HEK293T (cell line): ENCODE measurements at regions of chr5 and their contacts with region 1.

Region 1: GRCh38 chr5:31516802-31517201 is 15.1 kb downstream of the DROSHA start:
- DNase-seq: no peak

Region 2: DNA sequence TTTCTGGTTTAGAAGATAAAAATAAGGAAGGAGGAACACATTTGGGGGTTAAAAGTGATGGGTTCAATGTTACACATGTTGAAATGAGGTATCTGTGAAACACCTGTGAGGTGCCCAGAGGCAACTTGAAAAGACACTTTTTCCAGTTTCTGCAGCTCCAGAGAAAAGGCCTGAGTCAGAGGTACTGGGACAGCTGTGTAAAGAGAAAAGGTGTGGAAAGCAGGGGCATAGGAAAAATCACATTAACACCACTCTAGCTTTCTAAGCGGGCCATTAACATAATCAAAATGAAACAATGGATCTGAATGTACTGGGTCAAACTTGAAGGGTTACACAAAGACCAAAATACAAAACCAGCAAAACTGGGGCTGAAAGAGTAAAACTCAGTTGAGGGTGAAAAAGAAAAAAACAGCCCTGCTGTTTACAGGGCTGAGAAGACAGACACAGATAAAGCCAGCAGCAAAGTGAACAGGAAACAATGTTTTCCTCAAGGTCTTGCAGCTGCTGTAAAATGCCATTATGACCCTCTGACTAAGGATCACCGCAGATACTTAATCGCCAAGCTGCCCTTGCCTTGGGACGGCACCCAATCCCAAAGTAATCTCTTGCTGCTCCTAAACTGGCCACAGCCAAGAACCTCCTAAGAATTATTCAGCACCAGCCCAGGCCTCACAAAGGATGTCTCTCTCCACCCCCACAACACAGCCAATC is 89.6 kb before region 1 on chr5:
- CTCF ChIA-PET with region 1: no interaction called
- POLR2A ChIA-PET with region 1: no interaction called
- DNase-seq: no peak

Region 3: DNA sequence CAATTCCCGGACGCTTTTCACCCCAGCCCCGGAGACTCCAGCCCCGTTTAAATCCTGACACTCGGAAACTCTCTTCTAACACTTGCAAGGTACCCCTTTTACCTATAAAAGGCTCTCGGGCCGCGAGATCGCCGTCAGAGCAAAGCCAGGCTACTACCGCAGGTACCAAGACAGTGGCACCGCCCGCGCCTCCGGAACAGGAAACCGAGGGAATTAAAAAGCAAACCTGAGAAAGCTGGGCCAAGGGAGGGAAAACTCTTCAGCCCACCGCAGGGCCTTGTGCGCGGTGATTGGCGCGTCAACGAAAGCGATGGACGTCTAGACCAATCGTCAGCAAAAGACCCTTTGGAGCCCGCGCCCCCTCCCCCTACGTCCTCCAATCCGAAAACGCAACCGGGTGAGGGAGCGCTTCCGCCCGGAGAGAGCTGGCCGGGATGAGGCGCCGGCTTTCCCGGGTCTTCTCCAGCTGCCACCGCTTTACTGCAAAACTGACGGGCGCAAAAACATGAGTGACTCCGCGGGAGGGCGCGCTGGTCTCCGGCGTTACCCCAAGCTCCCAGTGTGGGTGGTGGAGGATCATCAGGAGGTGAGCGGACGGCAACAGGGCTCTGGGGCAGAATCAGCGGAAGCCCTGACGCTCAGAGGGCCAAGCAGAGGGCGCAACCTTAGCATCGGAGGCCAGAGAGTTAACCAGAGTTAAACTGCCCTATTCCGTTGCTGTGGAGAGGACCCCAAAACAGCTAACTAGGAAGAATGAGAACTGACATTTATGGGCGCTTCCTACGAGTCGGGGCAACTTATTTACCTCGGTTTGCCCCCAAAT is 15.3 kb after region 1 on chr5 and contains the starts of genes C5orf22 and DROSHA:
- CTCF ChIA-PET with region 1: interaction called, 3 read pairs
- POLR2A ChIA-PET with region 1: interaction called, 15 read pairs
- DNase-seq: peak; percentile 90

Region 4: DNA sequence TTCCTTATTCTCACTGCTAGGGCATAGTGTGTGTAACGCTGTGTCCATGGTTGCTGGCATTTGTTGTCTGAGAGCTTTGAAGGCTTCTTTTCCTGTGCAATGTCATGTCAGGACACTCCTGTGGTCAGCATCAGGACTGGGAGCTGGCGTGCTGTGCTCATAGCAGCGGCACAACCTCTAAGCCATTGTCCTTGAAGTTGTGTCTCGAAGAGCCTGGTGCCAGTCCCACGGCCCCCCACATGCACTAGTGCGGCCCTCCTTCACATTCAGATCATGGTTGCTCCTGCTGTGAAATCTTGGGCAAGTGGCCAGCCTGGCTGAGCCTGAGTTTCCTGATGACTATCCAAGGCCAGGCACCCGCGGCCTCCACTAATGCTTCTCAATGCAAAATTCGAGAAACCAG is 154.5 kb after region 1 on chr5:
- CTCF ChIA-PET with region 1: no interaction called
- POLR2A ChIA-PET with region 1: no interaction called
- DNase-seq: no peak